Vagina (tissue), 2 donors: ENCODE measurements at regions of chr3 and their contacts with region 1.

Region 1: GRCh38 chr3:4065085-4065484 is 238.1 kb upstream of the SETMAR start:
- DNase-seq: no peak
- H3K4me3 ChIP-seq: no peak overlapping the region
- H3K27ac ChIP-seq: no peak overlapping the region
- H3K4me1 ChIP-seq: no peaks in the 10 kb centered on the region
- H3K27me3 ChIP-seq: no peaks in the 10 kb centered on the region
- CTCF ChIP-seq: no peak
- POLR2A ChIP-seq: no peak

Region 2: GRCh38 chr3:5731094-5731493 is 1666.0 kb after region 1 on chr3:
- intact Hi-C with region 1: loop called (anchors 5 kb)
- DNase-seq: no peak
- H3K4me3 ChIP-seq: no peak overlapping the region
- H3K27ac ChIP-seq: no peak overlapping the region
- H3K4me1 ChIP-seq: no peaks in the 10 kb centered on the region
- H3K27me3 ChIP-seq: no peaks in the 10 kb centered on the region
- CTCF ChIP-seq: no peak
- POLR2A ChIP-seq: no peak